Colonic mucosa (tissue), 4 donors: ENCODE measurements at regions of chr14 and their contacts with region 1.

Region 1: DNA sequence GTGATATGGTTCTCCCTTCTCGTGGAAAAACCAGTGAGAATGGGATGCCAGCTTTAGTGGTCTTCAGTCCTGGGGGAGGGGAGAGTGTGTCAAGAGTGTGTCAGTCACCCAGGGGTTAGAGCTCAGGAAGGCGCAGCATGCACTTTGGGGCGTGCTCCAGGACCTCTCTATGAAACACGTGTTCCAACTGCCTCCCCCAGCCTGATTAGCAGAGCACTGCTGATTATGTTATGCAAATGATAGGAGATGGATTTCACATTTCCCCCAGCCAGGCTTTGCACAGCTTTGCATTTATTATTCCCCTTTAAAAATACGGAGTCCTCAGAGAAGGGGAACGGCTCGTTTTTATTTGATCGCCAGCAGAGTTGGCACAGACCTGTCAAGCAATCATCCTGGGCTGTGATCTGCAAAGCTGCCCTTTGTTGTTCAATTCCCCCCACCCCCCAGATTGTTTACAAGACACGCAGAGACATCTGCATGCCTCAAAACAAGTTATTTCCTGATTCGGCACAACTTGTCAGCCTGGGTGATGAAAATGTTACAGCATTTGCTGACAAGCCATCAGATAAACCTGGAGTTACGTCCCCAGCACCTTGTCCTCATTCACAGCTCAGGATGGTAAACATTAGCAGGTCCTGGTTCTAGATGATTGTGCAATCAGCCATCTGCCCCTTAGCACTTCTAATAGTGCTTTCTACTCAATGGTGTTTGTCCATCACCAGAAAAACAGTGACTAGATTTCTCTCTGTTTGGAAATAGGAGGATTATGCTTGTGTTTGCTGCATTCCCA is 196.5 kb downstream of the NOVA1 start:
- DNase-seq: no peak
- H3K4me3 ChIP-seq: no peak overlapping the region
- H3K27ac ChIP-seq: no peak overlapping the region
- H3K4me1 ChIP-seq: no peaks in the 10 kb centered on the region
- H3K27me3 ChIP-seq: no peaks in the 10 kb centered on the region
- CTCF ChIP-seq: no peak

Region 2: GRCh38 chr14:26204728-26205479 is 196.5 kb before region 1 on chr14:
- intact Hi-C with region 1: no loop called
- DNase-seq: peak; percentile 20
- H3K4me3 ChIP-seq: peak overlapping the region; percentile 24
- H3K27ac ChIP-seq: no peak overlapping the region
- H3K4me1 ChIP-seq: no peaks in the 10 kb centered on the region
- H3K27me3 ChIP-seq: no peaks in the 10 kb centered on the region
- CTCF ChIP-seq: no peak

Region 3: GRCh38 chr14:26744903-26745302 is 343.5 kb after region 1 on chr14:
- intact Hi-C with region 1: loop called (anchors 5 kb)
- DNase-seq: no peak
- H3K4me3 ChIP-seq: no peak overlapping the region
- H3K27ac ChIP-seq: no peak overlapping the region
- H3K4me1 ChIP-seq: no peaks in the 10 kb centered on the region
- H3K27me3 ChIP-seq: no peaks in the 10 kb centered on the region
- CTCF ChIP-seq: no peak

Region 4: DNA sequence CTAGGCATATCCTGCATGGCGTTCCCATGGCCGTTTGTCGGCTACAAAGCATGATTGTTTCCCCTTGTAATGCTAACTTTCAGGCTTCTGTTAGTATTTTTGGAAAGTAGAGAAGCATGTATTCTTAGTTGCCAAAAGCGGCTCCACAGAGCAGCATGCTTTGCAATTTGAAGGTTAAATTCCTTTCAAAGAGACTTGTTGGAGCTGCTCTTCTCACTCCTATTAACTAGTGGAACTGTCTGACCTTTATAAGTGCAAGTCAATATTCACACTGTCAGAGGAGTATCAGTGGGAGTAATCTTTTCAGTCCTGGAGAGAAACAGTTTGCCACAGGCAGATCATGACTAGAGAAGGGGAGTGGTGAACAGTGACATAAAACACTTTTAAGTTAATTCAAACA is 852.6 kb after region 1 on chr14:
- intact Hi-C with region 1: no loop called
- DNase-seq: no peak
- H3K4me3 ChIP-seq: no peak overlapping the region
- H3K27ac ChIP-seq: no peak overlapping the region
- H3K4me1 ChIP-seq: no peaks in the 10 kb centered on the region
- H3K27me3 ChIP-seq: no peaks in the 10 kb centered on the region
- CTCF ChIP-seq: no peak